Activated T-helper 1 cell treated with anti-CD3 and anti-CD28 coated beads, Interleukin-12 subunit alpha, Interleukin-12 subunit beta, Interleukin-2, Interleukin-4 antibody, amounts not matched to agents 30 ng/mL and 10 ng/mL and 1 ng/mL, durations not matched to agents 14 hours and 24 hours and 36 hours (primary cell): ENCODE measurements at regions of chr14 and their contacts with region 1.

Region 1: DNA sequence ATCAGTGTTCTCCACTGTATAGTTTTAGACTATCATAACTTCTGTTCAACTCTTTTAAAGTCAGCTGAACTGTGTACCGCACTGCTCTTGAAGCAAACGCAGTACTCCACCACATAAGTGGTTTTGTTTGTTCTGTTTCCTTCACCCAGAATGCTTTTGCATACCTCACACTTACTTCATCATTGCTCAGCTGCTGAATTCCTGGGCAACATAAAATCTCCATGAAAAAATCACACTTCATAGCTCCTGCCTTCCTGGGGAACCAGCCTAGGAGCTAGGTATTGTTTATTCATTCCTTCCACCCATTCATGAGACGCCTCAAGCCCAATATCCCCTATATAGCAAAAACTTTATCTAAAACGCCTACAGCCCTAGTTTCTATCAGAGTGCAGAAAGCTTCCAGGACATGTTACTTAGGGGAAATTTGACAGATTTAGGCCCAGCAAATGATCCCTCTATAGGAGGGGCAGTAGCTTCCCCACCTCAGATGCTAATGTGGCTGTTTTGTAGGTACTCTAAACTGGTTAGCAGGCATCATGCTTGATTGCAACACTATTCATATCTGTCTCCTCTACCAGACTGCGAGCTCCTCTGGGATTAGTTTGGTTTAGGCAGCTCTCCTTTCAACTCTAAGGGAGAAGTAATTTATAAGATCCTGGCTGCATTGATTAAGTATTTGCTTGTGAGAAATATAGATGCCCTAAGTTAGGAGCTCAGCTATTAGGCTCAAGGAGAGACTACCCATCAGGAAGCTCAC is 44.5 kb downstream of the LRRC9 start:
- DNase-seq: no peak
- H3K4me3 Mint-ChIP-seq: peak overlapping the region; percentile 80
- H3K27ac Mint-ChIP-seq: no peak overlapping the region
- H3K4me1 Mint-ChIP-seq: no peaks in the 10 kb centered on the region
- H3K27me3 Mint-ChIP-seq: peaks cover 7% of the 10 kb centered on the region

Region 2: DNA sequence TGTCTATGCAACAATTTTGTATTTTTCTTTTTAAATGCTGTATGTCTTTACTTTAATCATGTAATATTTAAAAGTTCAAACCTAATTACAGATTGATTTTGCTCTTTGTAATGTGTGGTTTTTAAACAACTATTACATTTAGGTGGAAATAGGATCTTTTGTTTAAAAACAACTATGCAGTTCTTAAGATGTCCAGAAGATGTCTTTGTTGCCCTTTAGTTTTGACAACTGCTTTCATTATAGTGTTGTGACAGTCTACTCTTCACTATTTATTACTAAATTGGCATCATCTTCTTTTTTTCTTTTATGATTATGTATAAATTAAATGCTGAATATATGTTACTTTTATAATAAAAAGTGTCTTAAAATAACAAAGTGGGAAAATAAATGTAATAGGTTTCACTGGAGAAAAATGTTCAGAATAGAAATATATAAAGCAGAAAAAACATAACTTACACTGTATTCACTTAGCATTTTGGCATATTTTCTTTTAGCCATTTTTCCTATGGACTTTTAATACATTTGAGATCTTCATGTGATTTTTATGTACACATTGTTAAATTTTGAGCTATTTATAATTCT is 100.2 kb after region 1 on chr14:
- intact Hi-C with region 1: loop called (anchors 1 kb)
- DNase-seq: no peak
- H3K4me3 Mint-ChIP-seq: no peak overlapping the region
- H3K27ac Mint-ChIP-seq: no peak overlapping the region
- H3K4me1 Mint-ChIP-seq: no peaks in the 10 kb centered on the region
- H3K27me3 Mint-ChIP-seq: peaks cover 9% of the 10 kb centered on the region

Region 3: DNA sequence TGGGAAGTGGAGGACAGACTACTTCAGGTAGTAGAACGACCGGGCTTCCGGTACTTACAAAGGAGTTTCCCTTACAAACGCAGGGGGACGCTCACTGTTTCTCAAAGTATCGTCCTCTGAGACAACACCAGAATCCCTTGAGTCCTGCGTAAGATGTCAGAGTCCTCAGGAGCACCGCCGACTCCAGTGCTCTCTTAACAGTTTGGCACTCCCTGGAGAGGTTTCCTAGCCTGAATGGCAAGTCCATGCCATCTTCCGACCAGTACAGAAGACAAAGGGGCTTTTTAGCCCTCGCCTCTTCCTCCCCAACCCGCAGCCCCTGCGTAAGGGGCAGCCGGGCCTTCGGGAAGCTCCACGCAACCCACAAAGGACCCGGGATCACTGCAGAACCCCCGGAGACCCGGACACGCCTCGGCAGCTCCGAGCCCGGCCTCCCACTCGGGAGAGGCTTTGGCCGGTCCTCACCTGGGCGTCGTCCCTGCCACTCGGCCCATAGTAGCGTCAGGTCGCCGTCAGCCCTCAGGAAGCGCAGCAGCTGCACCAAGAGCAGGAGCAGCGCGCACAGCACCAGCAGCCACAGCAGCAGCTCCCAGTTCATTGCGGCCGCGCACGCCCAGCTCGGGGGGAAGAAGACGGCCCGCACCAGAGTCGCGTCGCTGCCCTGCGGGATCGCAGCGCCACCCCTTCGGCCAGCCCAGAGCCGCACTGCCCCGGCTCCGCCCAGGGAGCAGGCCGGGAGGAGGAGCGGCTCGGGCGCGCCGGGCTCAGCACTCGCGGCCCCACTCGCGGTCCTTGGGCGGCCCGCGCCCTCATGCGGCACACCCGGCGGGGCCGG is 200.5 kb after region 1 on chr14 and contains the start of gene DHRS7:
- intact Hi-C with region 1: loop called (anchors 5 kb)
- DNase-seq: peak; percentile 55
- H3K4me3 Mint-ChIP-seq: peak within 1 kb of the TSS; percentile 95
- H3K27ac Mint-ChIP-seq: peak within 1 kb of the TSS; percentile 98
- H3K4me1 Mint-ChIP-seq: peaks cover 20% of the 10 kb centered on the region
- H3K27me3 Mint-ChIP-seq: no peaks in the 10 kb centered on the region
- total RNA-seq, gene DHRS7: 43.6 and 47.2 TPM in 2 replicates

Region 4: GRCh38 chr14:60331201-60332045 is 367.0 kb after region 1 on chr14:
- intact Hi-C with region 1: loop called (anchors 10 kb)
- DNase-seq: peak; percentile 60
- H3K4me3 Mint-ChIP-seq: peak overlapping the region; percentile 92
- H3K27ac Mint-ChIP-seq: peak overlapping the region; percentile 94
- H3K4me1 Mint-ChIP-seq: peaks cover 45% of the 10 kb centered on the region
- H3K27me3 Mint-ChIP-seq: peaks cover 37% of the 10 kb centered on the region